Endothelial cell of umbilical vein (primary cell): ENCODE measurements at regions of chrX and their contacts with region 1.

Region 1: DNA sequence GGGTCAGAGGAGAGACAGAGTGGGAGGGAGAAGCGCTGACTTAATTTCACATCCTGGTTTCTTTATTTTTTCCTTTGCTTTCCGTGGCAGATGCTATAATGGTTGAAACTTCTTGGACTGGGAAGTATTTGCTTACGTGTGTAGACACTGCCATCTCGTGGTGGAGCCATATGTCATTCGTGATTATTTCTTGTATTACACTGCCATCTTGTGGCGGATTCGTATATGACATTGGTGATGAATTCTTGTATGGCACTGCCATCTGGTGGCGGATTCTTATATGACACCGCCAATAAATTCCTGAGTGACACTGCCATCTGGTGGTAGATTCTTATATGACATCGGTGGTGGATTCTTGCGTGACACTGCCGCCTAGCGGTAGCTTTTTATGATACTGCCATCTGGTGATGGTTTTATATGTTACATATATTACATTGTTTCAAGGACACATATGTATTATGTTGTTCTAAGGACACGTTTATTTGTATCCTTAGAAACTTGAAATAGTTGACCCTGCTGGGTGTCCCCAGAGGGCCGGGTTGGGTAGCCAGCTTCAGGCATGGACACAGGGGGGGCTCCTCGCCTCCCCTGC is 37.3 kb upstream of the CLCN4 start:
- DNase-seq: peak; percentile 81
- H3K4me3 ChIP-seq: no peak overlapping the region
- H3K27ac ChIP-seq: no peak overlapping the region
- H3K4me1 ChIP-seq: no peaks in the 10 kb centered on the region
- H3K27me3 ChIP-seq: no peaks in the 10 kb centered on the region
- CTCF ChIP-seq: peak; percentile 76 to 99
- POLR2A ChIP-seq: no peak

Region 2: DNA sequence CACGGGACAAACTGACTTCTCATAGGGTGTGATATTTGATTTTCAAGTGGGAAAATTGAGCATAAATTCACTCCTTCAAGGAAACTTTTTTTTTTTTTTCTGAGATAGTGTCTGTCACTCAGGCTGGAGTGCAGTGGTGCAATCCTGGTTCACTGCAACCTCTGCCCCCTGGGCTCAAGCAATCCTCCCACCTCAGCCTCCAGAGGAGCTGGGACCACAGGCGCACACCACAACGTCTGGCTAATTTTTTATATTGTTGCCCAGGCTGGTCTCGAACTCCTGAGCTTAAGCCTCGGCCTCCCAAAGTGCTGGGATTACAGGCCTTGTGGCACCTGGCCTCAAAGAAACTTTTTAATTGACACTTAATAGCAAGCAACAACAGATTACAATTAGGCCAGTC is 138.6 kb before region 1 on chrX:
- CTCF ChIA-PET with region 1: interaction called, 20 read pairs
- POLR2A ChIA-PET with region 1: no interaction called
- dilution Hi-C with region 1: no loop called
- intact Hi-C with region 1: no loop called
- DNase-seq: no peak
- H3K4me3 ChIP-seq: no peak overlapping the region
- H3K27ac ChIP-seq: no peak overlapping the region
- H3K4me1 ChIP-seq: peaks cover 3% of the 10 kb centered on the region
- H3K27me3 ChIP-seq: no peaks in the 10 kb centered on the region
- CTCF ChIP-seq: no peak
- POLR2A ChIP-seq: no peak

Region 3: GRCh38 chrX:9995855-9996339 is 123.6 kb before region 1 on chrX:
- CTCF ChIA-PET with region 1: interaction called, 26 read pairs
- POLR2A ChIA-PET with region 1: no interaction called
- dilution Hi-C with region 1: no loop called
- intact Hi-C with region 1: loop called (anchors 1 kb)
- DNase-seq: peak; percentile 73
- H3K4me3 ChIP-seq: no peak overlapping the region
- H3K27ac ChIP-seq: no peak overlapping the region
- H3K4me1 ChIP-seq: no peaks in the 10 kb centered on the region
- H3K27me3 ChIP-seq: no peaks in the 10 kb centered on the region
- CTCF ChIP-seq: peak; percentile 75 to 88
- POLR2A ChIP-seq: no peak

Region 4: DNA sequence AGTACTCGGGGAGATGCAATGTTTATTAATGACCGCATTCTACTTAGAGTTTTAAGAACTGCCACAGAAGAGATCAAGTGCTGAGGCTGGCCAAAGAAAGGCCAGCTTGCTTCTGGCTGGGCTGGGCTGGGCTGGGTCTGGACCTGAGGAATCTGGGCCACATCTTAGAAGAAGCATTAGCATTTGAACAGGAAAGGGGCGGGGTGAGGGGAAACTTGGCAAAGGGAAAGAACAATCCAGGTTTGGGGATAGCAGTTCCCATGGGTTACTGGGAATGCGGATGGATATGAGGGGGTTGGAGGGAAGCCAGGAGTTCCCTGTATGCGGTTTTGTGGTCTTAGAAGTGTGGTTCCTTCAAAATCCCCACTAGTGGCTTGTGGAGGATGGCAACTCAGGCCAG is 69.0 kb before region 1 on chrX:
- CTCF ChIA-PET with region 1: interaction called, 3 read pairs
- POLR2A ChIA-PET with region 1: no interaction called
- dilution Hi-C with region 1: no loop called
- intact Hi-C with region 1: loop called (anchors 1 kb)
- DNase-seq: peak; percentile 23
- H3K4me3 ChIP-seq: no peak overlapping the region
- H3K27ac ChIP-seq: no peak overlapping the region
- H3K4me1 ChIP-seq: peaks cover 66% of the 10 kb centered on the region
- H3K27me3 ChIP-seq: no peaks in the 10 kb centered on the region
- CTCF ChIP-seq: no peak
- POLR2A ChIP-seq: no peak